ENCODE measurements at regions of chr17 and their contacts with region 1.

Region 1: GRCh38 chr17:8435245-8436168 is at the start of gene NDEL1:
- DNase-seq: peak; percentile 98
- H3K4me3 Mint-ChIP-seq: peak within 1 kb of the TSS; percentile 98
- H3K27ac Mint-ChIP-seq: peak within 1 kb of the TSS; percentile 95
- H3K4me1 Mint-ChIP-seq: peaks cover 24% of the 10 kb centered on the region
- H3K27me3 Mint-ChIP-seq: no peaks in the 10 kb centered on the region
- total RNA-seq, gene NDEL1: 66.6 and 66.9 TPM in 2 replicates

Region 2: GRCh38 chr17:8189711-8190477 is 245.6 kb before region 1 on chr17 and contains the start of gene BORCS6:
- intact Hi-C with region 1: no loop called
- DNase-seq: peak; percentile 95
- H3K4me3 Mint-ChIP-seq: no peak within 1 kb of the TSS
- H3K27ac Mint-ChIP-seq: peak within 1 kb of the TSS; percentile 86
- H3K4me1 Mint-ChIP-seq: peaks cover 11% of the 10 kb centered on the region
- H3K27me3 Mint-ChIP-seq: no peaks in the 10 kb centered on the region
- total RNA-seq, gene BORCS6: 7.8 and 8.0 TPM in 2 replicates

Region 3: GRCh38 chr17:8383143-8383822 is 52.2 kb before region 1 on chr17 and contains the start of gene RPL26:
- intact Hi-C with region 1: loop called (anchors 1 kb)
- DNase-seq: peak; percentile 94
- H3K4me3 Mint-ChIP-seq: peak within 1 kb of the TSS; percentile 99
- H3K27ac Mint-ChIP-seq: peak within 1 kb of the TSS; percentile 96
- H3K4me1 Mint-ChIP-seq: peaks cover 33% of the 10 kb centered on the region
- H3K27me3 Mint-ChIP-seq: no peaks in the 10 kb centered on the region
- total RNA-seq, gene RPL26: 2,352 and 2,379 TPM in 2 replicates

Region 4: DNA sequence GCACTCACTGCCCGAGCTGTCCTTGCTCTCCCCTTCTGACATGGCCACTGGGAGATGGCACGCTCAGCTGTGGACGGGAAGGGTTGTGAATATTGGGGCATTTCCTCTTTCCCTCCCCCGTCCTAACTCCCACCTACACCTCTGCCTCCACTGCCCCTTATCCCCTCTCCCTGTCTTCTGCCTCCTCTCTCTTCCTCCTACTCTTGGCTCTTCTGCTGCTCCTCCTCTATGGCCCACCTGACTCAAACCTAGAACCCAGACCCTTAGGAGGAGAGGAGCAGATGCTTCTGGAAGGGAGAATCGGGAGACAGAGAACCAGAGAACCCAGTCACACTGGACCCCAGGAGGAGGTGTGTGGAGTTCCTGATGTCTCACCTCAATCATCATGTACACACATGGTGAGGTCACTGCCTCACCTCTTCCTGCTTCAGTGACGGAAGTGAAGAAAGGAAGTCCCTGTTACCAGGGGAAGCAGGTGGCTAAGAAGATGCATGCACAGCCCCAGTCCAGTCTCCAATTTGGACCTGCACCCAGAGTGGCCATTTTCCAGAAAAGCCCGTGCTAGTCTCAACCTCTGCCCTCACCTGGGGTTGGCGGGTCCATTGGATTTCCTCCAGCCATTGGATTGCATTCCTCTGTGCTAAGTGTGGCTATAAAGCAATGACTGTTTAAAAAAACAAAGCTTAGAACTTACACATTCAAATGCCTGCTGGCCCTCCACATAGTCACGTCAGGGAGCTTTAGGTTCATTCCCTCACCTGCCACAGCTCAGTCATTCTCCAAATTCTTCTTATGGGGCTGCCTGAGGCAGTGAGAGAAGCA is 41.9 kb before region 1 on chr17:
- intact Hi-C with region 1: no loop called
- DNase-seq: no peak
- H3K4me3 Mint-ChIP-seq: no peak overlapping the region
- H3K27ac Mint-ChIP-seq: peak overlapping the region; percentile 74
- H3K4me1 Mint-ChIP-seq: peaks cover 14% of the 10 kb centered on the region
- H3K27me3 Mint-ChIP-seq: peaks cover 25% of the 10 kb centered on the region

Region 5: GRCh38 chr17:10305398-10305797 is 1869.9 kb after region 1 on chr17:
- intact Hi-C with region 1: no loop called
- DNase-seq: no peak
- H3K4me3 Mint-ChIP-seq: no peak overlapping the region
- H3K27ac Mint-ChIP-seq: no peak overlapping the region
- H3K4me1 Mint-ChIP-seq: no peaks in the 10 kb centered on the region
- H3K27me3 Mint-ChIP-seq: no peaks in the 10 kb centered on the region

Measured in activated T-helper 2 cell treated with anti-CD3 and anti-CD28 coated beads, Interferon-gamma antibody, Interleukin-2, Interleukin-4, amounts not matched to agents 10 μg/mL and 5 μg/mL and 100 μg/mL, durations not matched to agents 14 hours and 24 hours and 36 hours (primary cell).